Calu3 (cell line): ENCODE measurements at regions of chr1 and their contacts with region 1.

Region 1: DNA sequence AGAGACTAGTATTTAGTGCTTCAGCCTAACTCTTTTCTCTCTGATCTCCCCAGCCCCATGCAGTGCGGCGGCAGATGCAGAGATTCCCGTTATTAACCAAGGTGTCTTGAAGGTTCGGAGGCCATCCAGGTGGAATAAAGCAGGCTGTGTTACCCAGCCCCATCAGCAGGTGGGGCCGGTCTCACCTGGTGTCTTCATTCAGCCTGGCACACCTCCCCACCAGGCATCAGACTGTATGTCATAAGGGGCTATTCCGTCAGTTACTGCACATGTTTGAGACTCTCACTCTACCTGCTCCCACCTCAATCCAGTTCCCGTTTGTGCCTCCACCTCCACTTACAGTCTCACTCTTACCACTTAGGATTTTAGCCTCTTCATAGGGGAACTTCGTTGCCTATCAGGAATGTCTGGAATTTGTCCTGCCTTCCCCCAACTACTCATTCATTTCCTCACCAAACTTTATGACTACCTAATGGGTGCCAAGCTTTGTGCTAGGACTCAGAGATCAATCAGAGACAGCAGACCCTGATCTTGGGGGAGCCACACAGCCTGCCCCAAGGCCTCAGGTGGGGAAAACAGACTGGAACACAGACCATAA is 170.2 kb downstream of the PLPP3 start:
- DNase-seq: peak; percentile 76
- H3K4me3 Mint-ChIP-seq: no peak overlapping the region
- H3K27ac Mint-ChIP-seq: no peak overlapping the region
- H3K4me1 Mint-ChIP-seq: peaks cover 19% of the 10 kb centered on the region
- H3K27me3 Mint-ChIP-seq: no peaks in the 10 kb centered on the region
- CTCF ChIP-seq: peak; percentile 68

Region 2: DNA sequence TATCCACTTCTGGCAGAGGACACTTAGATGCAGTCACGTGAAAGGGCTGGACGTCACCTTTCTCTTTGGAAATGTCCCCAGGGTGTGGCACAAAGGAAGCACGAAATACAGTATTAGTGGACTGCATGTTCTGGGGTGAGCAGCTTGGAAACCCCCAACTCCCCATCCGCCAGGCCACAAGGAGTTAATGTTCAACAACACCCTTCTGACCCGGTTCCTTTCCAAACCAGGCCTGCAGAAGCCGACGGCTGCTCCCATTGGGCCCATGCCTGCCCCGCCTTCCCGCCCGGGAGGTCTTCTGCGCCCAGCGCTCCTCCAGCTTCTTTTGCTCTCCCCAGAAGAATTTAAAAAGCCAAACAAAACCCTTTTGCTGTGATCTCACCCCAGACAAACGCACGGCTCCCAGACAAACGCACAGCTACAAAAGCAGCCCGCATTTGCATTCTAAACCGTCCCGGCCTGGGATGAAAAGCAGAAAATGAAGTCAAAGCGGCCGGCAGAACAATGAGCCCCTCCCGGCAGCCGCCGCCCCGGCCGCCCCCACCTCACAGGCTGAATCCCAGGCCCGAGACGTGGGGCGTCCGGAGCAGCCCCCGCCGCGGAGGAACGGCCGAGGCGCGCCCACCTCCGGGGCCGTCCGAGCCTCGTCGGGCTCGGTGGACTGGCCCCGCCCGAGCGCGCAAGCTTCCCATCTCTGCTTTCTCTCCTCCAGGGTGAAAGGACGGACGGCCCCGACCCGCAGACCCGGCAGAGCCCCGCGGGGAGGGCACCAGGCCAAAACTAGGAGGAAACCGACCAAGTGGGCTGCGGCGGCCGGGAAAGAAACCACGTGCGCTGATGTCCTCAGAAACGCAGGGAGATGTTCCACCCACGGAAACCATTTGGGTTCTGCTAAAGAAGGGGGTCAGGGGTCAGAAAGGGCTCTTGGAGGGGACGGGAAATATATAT is 68.2 kb after region 1 on chr1:
- CTCF ChIA-PET with region 1: no interaction called
- intact Hi-C with region 1: loop called (anchors 5 kb)
- DNase-seq: peak; percentile 52
- H3K4me3 Mint-ChIP-seq: peak overlapping the region; percentile 68
- H3K27ac Mint-ChIP-seq: no peak overlapping the region
- H3K4me1 Mint-ChIP-seq: peaks cover 10% of the 10 kb centered on the region
- H3K27me3 Mint-ChIP-seq: no peaks in the 10 kb centered on the region
- CTCF ChIP-seq: no peak

Region 3: DNA sequence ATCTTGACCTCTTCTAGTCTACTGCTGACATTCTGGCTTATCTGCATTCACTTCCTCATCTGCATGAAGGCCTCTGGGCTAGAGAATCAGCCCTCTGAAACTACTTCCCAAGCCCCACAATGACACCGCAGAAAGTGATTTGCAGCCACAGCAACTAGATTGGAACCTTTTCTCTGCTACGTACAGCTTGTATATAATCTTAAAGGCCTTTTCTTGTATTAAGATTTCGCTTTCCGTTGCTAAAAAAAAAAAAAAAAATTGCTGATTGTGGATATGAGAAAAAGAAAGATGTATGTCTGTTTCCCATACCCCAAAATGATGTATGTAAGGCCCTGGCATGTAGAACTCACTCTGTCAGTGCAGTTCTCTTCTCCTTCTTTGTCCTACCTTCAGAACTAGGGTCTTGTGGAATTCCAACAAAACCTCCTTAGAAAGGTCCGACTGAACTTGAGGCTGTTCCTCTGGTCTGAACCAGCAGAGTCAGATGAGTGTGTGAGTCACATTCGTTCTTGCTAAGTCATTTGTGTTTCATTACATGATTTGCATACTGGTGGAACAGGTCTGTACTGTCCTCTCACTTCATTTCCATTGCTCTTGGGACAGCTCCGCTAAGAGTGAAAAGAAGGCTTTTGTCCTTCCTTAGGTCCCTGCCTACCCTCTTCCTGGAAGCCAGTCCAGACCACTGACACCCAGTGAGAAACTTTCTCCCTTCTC is 107.5 kb after region 1 on chr1:
- CTCF ChIA-PET with region 1: no interaction called
- intact Hi-C with region 1: loop called (anchors 5 kb)
- DNase-seq: peak; percentile 60
- H3K4me3 Mint-ChIP-seq: peak overlapping the region; percentile 67
- H3K27ac Mint-ChIP-seq: peak overlapping the region; percentile 96
- H3K4me1 Mint-ChIP-seq: peaks cover 42% of the 10 kb centered on the region
- H3K27me3 Mint-ChIP-seq: no peaks in the 10 kb centered on the region
- CTCF ChIP-seq: no peak

Region 4: DNA sequence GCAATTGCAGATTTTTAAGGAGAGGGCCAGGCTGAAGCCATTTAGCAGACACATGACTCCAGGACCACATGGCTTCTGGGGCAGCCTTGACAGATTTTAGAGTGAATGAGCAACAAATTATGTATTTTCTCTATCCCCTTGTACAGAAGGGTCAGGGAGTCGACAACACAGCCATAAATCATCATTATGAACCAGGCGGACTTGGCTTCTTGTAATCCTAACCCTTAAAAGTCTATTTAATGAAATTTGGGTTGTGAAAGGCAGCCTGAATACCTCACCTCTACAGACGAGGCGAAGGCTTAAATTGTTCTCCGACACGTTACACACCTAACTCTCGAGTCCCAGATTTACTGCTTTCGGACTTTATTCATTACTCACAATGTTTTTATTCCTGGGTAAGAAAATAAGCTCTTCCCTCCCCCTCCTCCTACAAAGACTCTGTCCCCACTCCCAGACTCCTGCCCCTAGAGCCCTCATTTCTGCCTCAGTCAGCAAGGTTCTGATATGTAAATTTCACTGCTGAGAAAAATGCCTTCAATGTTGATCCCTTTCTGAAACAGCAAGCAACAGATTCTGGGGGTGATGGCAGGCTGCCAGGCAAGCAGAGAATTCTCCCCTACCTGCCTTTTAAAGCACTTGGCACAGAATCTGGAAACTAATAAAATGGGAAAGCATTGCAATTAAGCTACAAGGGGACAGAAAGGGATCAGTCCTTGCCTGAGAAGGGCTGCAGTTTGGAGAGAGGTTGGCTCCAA is 118.5 kb after region 1 on chr1:
- CTCF ChIA-PET with region 1: no interaction called
- intact Hi-C with region 1: no loop called
- DNase-seq: no peak
- H3K4me3 Mint-ChIP-seq: no peak overlapping the region
- H3K27ac Mint-ChIP-seq: no peak overlapping the region
- H3K4me1 Mint-ChIP-seq: peaks cover 25% of the 10 kb centered on the region
- H3K27me3 Mint-ChIP-seq: no peaks in the 10 kb centered on the region
- CTCF ChIP-seq: no peak

Region 5: GRCh38 chr1:56745231-56745630 is 336.0 kb after region 1 on chr1:
- CTCF ChIA-PET with region 1: no interaction called
- intact Hi-C with region 1: no loop called
- DNase-seq: no peak
- H3K4me3 Mint-ChIP-seq: no peak overlapping the region
- H3K27ac Mint-ChIP-seq: no peak overlapping the region
- H3K4me1 Mint-ChIP-seq: no peaks in the 10 kb centered on the region
- H3K27me3 Mint-ChIP-seq: no peaks in the 10 kb centered on the region
- CTCF ChIP-seq: no peak